ENCODE measurements at regions of chr18 and their contacts with region 1.

Region 1: GRCh38 chr18:63161761-63162195 is 157.8 kb downstream of the BCL2 start:
- DNase-seq: peak; percentile 48
- ATAC-seq: peak; percentile 62
- H3K4me3 Mint-ChIP-seq: peak overlapping the region; percentile 84
- H3K27ac Mint-ChIP-seq: peak overlapping the region; percentile 99
- H3K4me1 Mint-ChIP-seq: peaks cover 91% of the 10 kb centered on the region
- H3K27me3 Mint-ChIP-seq: no peaks in the 10 kb centered on the region
- CTCF ChIP-seq: no peak

Region 2: DNA sequence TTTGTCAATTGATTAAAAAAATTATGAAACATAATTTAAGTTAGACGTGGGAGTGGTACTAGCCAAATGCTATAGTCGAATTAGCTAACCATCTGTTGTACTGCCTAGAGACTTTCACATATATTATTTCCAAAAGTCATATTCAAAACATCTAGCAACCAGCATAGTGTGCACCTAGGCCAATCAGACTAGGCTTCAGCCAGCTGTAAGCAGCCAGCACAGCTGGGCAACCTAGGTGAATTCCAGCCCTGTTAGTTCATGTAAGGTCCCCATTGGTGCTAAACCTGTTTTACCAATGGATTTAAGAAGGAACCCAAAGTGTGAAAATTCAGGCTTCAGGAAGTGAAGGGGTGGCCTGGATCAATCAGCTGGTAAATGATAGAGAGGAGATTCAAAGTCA is 13.5 kb after region 1 on chr18:
- CTCF ChIA-PET with region 1: interaction called, 4 read pairs
- POLR2A ChIA-PET with region 1: interaction called, 52 read pairs
- intact Hi-C with region 1: loop called (anchors 1 kb)
- DNase-seq: no peak
- ATAC-seq: peak; percentile 65
- H3K4me3 Mint-ChIP-seq: no peak overlapping the region
- H3K27ac Mint-ChIP-seq: peak overlapping the region; percentile 35
- H3K4me1 Mint-ChIP-seq: peaks cover 85% of the 10 kb centered on the region
- H3K27me3 Mint-ChIP-seq: no peaks in the 10 kb centered on the region
- CTCF ChIP-seq: no peak

Region 3: GRCh38 chr18:63207143-63207790 is 45.5 kb after region 1 on chr18:
- CTCF ChIA-PET with region 1: no interaction called
- POLR2A ChIA-PET with region 1: interaction called, 8 read pairs
- intact Hi-C with region 1: loop called (anchors 1 kb)
- DNase-seq: no peak
- ATAC-seq: peak; percentile 60
- H3K4me3 Mint-ChIP-seq: peak overlapping the region; percentile 67
- H3K27ac Mint-ChIP-seq: peak overlapping the region; percentile 82
- H3K4me1 Mint-ChIP-seq: peaks cover 80% of the 10 kb centered on the region
- H3K27me3 Mint-ChIP-seq: no peaks in the 10 kb centered on the region
- CTCF ChIP-seq: no peak

Region 4: DNA sequence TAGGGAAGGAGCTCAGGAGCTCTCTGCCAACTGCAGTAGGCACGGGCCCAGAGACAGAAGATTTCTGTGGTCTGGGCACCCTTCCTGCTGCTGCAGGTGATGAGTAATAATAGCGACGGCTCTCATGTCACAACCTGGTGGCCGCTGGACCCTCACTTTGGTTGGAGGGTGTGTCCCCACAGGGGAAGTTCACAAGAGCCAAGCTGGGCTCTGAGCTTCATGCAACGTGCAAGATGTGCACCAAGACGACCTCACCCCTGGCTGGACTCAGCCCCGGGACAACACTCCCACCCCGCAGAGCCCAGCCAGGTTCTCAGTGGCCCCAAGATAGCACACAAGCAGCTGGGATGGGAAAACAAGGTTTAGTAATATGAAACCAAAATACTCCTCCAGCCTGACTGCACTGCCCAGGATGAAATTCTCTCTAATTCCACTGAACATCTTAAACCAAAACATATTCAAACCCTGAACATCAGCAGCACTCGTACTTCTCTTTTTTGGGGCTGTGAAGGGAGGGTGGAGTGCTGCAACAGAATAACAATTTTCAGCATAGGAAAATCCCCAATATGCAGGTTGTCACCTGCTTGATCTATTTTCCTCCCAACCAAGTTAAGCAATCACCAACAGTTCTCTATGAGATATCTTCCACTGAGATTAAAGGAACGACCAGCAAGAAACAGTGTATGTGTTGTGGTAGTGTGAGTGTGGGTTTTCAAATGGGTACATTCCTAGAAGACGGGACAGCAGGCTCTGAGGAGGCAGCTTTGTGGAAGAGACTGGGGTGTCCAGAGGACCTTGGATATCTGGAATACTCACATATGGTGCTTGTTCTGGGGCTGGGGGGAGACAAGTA is 131.3 kb after region 1 on chr18:
- CTCF ChIA-PET with region 1: interaction called, 3 read pairs
- POLR2A ChIA-PET with region 1: interaction called, 20 read pairs
- intact Hi-C with region 1: loop called (anchors 1 kb)
- DNase-seq: peak; percentile 46
- ATAC-seq: peak; percentile 80
- H3K4me3 Mint-ChIP-seq: peak overlapping the region; percentile 64
- H3K27ac Mint-ChIP-seq: no peak overlapping the region
- H3K4me1 Mint-ChIP-seq: peaks cover 21% of the 10 kb centered on the region
- H3K27me3 Mint-ChIP-seq: no peaks in the 10 kb centered on the region
- CTCF ChIP-seq: no peak

Measured in activated B cell treated with CpG ODN at 0.5 μM for 24 hours (primary cell).